H1 (cell line): ENCODE measurements at regions of chr5 and their contacts with region 1.

Region 1: GRCh38 chr5:159316519-159317383 is 13.5 kb downstream of the IL12B start:
- DNase-seq: no peak
- H3K4me3 ChIP-seq: no peak overlapping the region
- H3K27ac ChIP-seq: no peak overlapping the region
- H3K4me1 ChIP-seq: no peaks in the 10 kb centered on the region; a peak in 1 of 7 replicates
- H3K27me3 ChIP-seq: peaks cover 0 to 2% (median under 1%) of the 10 kb centered on the region in 4 experiments; a peak in 1 of 7 replicates
- CTCF ChIP-seq: peak; percentile 49 to 89 (median 66)
- EP300 ChIP-seq: no peak
- POLR2A ChIP-seq: no peak
- RAD21 ChIP-seq: peak; percentile 72 to 78

Region 2: GRCh38 chr5:159156426-159157238 is 160.1 kb before region 1 on chr5:
- CTCF ChIA-PET with region 1: interaction called, 38 read pairs
- POLR2A ChIA-PET with region 1: interaction called, 3 read pairs
- DNase-seq: no peak
- H3K4me3 ChIP-seq: no peak overlapping the region
- H3K27ac ChIP-seq: no peak overlapping the region
- H3K4me1 ChIP-seq: no peaks in the 10 kb centered on the region
- H3K27me3 ChIP-seq: no peaks in the 10 kb centered on the region
- CTCF ChIP-seq: peak in 2 of 3 experiments; percentile 64 to 75; a peak in 3 of 4 replicates
- EP300 ChIP-seq: no peak
- POLR2A ChIP-seq: no peak
- RAD21 ChIP-seq: peak; percentile 85 to 88

Region 3: DNA sequence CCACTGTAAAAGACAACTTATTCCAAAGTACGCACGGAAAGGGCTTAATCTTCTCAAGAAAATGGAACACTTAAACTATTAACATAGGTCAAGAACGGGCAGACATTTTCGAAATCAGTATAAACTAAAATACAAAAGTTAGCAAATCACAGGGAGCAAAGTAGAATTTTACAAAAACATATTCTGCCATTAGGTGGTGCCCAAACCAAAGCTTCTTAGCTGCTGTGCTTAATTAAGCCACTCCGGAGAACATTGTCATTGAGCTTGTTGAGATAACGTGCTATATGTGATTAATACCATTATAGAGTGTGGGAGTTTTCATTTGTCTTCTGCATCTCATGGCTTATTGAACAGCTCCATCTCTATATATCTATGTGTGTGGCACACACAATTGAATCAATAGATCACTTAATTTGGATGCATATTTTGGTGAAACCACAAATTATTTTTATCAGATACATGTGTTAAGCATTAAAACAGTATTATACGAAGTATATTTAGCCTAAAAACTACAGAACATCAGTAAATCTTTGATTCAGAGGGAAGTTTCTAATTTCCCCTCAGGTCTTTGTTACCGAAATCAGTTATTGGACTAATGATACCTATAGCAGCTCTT is 30.2 kb before region 1 on chr5:
- CTCF ChIA-PET with region 1: interaction called, 34 read pairs
- POLR2A ChIA-PET with region 1: no interaction called
- DNase-seq: no peak
- H3K4me3 ChIP-seq: no peak overlapping the region
- H3K27ac ChIP-seq: no peak overlapping the region
- H3K4me1 ChIP-seq: no peaks in the 10 kb centered on the region
- H3K27me3 ChIP-seq: no peaks in the 10 kb centered on the region
- CTCF ChIP-seq: peak in 2 of 3 experiments; percentile 35 to 43; a peak in 2 of 4 replicates
- EP300 ChIP-seq: no peak
- POLR2A ChIP-seq: no peak
- RAD21 ChIP-seq: peak; percentile 80 to 81